ENCODE measurements at regions of chr2 and their contacts with region 1.

Region 1: GRCh38 chr2:16496426-16497388 is 168.9 kb downstream of the CYRIA start:
- DNase-seq: no peak
- H3K4me3 ChIP-seq: no peak overlapping the region
- H3K27ac ChIP-seq: no peak overlapping the region
- H3K4me1 ChIP-seq: no peaks in the 10 kb centered on the region
- H3K27me3 ChIP-seq: peaks cover 4% of the 10 kb centered on the region
- CTCF ChIP-seq: no peak

Region 2: GRCh38 chr2:16114836-16115235 is 381.9 kb before region 1 on chr2:
- CTCF ChIA-PET with region 1: no interaction called
- POLR2A ChIA-PET with region 1: no interaction called
- intact Hi-C with region 1: loop called (anchors 5 kb)
- DNase-seq: no peak
- H3K4me3 ChIP-seq: no peak overlapping the region
- H3K27ac ChIP-seq: no peak overlapping the region
- H3K4me1 ChIP-seq: no peaks in the 10 kb centered on the region
- H3K27me3 ChIP-seq: no peaks in the 10 kb centered on the region
- CTCF ChIP-seq: no peak

Region 3: GRCh38 chr2:16559278-16560067 is 62.8 kb after region 1 on chr2:
- CTCF ChIA-PET with region 1: no interaction called
- POLR2A ChIA-PET with region 1: no interaction called
- intact Hi-C with region 1: no loop called
- DNase-seq: no peak
- H3K4me3 ChIP-seq: no peak overlapping the region
- H3K27ac ChIP-seq: no peak overlapping the region
- H3K4me1 ChIP-seq: no peaks in the 10 kb centered on the region
- H3K27me3 ChIP-seq: no peaks in the 10 kb centered on the region
- CTCF ChIP-seq: no peak

Measured in A673 (cell line).